ENCODE measurements at regions of chr19 and their contacts with region 1.

Region 1: DNA sequence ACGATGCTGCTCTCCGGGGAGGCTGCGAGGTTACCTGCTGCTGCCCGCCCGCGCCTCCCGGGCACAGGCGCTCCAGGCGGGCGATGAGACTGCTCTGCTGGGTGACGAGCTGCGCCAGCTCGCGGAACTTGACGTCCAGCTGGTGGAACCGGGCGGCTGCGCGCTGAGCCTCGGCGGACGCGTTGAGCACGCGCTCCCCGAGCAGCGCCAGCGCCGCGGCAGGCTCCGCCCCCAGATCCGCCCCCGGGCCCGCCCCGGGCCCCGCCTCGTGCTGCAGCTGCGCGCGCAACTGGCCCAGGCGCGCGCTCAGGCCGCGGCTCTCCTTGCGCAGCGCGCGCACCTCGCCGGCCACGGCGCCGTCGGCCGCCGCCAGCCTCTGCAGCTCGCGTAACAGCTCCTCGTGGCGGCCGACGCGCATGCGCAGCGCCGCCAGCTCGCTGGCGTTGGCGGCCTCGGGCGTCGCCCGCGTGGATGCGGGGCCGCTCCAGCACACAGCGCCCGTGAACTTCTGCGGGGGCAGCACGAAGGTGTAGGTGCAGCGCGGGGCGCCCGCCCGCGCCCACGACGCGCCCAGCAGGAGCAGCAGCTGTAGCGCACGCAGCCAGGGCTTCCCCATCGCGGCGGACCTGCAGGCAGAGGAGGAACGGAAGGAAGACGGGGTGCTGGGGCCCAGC is 6.4 kb downstream of the ANGPTL6 start:
- DNase-seq: no peak
- ATAC-seq: peak; percentile 81
- H3K4me3 ChIP-seq: peak overlapping the region; percentile 21; the same call in 1 of the 2 replicates
- H3K27ac ChIP-seq: peak overlapping the region; percentile 70
- H3K4me1 ChIP-seq: peaks cover 35% of the 10 kb centered on the region
- H3K27me3 ChIP-seq: no peaks in the 10 kb centered on the region
- CTCF ChIP-seq: no peak
- EP300 ChIP-seq: no peak
- POLR2A ChIP-seq: peak; percentile 81
- RAD21 ChIP-seq: no peak

Region 2: GRCh38 chr19:10112895-10113591 is 17.0 kb after region 1 on chr19:
- CTCF ChIA-PET with region 1: interaction called, 171 read pairs
- POLR2A ChIA-PET with region 1: interaction called, 58 read pairs
- RAD21 ChIA-PET with region 1: interaction called, 166 read pairs
- SMC1A ChIA-PET with region 1: interaction called, 150 read pairs
- in situ Hi-C with region 1: no loop called
- intact Hi-C with region 1: loop called (anchors 1 kb)
- DNase-seq: no peak
- ATAC-seq: peak; percentile 72
- H3K4me3 ChIP-seq: peak overlapping the region; percentile 51; the same call in 1 of the 2 replicates
- H3K27ac ChIP-seq: peak overlapping the region; percentile 62
- H3K4me1 ChIP-seq: peaks cover 40% of the 10 kb centered on the region
- H3K27me3 ChIP-seq: no peaks in the 10 kb centered on the region
- CTCF ChIP-seq: peak; percentile 67 to 96 (median 79)
- EP300 ChIP-seq: no peak
- POLR2A ChIP-seq: no peak; the same call in 1 of the 2 replicates
- RAD21 ChIP-seq: peak; percentile 81

Region 3: DNA sequence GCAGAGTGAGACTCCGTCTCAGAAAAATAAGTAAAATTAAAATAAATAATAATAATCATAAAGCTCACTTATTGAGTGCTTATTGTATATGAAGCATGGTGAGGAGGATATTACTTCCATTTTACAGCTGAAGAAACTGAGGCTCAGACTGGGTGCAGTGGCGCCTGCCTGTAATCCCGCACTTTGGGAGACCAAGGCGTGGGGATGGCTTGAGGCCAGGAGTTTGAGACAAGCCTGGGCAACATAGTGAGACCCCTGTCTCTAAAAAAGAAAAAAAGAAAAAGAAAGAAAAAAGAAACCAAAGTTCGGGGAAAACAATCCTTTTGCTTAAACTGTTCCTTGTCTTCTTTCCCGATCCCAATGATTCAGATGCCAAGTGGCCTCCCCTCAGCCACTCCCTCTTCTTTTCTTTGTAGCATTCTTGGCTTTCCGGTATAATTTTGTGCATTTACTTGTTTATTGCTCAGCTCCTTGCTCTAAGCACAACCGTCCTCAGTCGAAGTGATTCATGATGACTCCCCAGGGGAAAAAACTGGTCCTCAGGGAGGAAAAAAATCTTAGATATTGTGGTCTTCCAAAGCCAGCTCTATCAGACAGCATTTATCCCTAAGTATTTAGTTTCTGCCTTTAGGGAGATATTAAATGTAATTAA is 24.6 kb after region 1 on chr19:
- CTCF ChIA-PET with region 1: interaction called, 171 read pairs
- POLR2A ChIA-PET with region 1: interaction called, 58 read pairs
- RAD21 ChIA-PET with region 1: interaction called, 166 read pairs
- SMC1A ChIA-PET with region 1: interaction called, 150 read pairs
- in situ Hi-C with region 1: no loop called
- intact Hi-C with region 1: no loop called
- DNase-seq: no peak
- ATAC-seq: no peak
- H3K4me3 ChIP-seq: no peak overlapping the region
- H3K27ac ChIP-seq: no peak overlapping the region
- H3K4me1 ChIP-seq: 0 out of 2 replicates have a peak, but pooled peaks cover 2% of the 10 kb centered on the region
- H3K27me3 ChIP-seq: no peaks in the 10 kb centered on the region
- CTCF ChIP-seq: no peak
- EP300 ChIP-seq: no peak
- POLR2A ChIP-seq: no peak
- RAD21 ChIP-seq: no peak

Region 4: GRCh38 chr19:10189616-10190015 is 93.5 kb after region 1 on chr19:
- CTCF ChIA-PET with region 1: no interaction called
- POLR2A ChIA-PET with region 1: no interaction called
- RAD21 ChIA-PET with region 1: no interaction called
- SMC1A ChIA-PET with region 1: no interaction called
- in situ Hi-C with region 1: no loop called
- intact Hi-C with region 1: no loop called
- DNase-seq: no peak
- ATAC-seq: peak; percentile 5; the same call in 1 of the 3 replicates
- H3K4me3 ChIP-seq: 0 out of 2 replicates have a peak overlapping the region, but pooled peaks have one; percentile 19
- H3K27ac ChIP-seq: no peak overlapping the region
- H3K4me1 ChIP-seq: peaks cover 11% of the 10 kb centered on the region
- H3K27me3 ChIP-seq: no peaks in the 10 kb centered on the region
- CTCF ChIP-seq: no peak
- EP300 ChIP-seq: no peak
- POLR2A ChIP-seq: no peak
- RAD21 ChIP-seq: no peak

Measured in GM12878 (cell line).